ENCODE measurements at regions of chr17 and their contacts with region 1.

Region 1: DNA sequence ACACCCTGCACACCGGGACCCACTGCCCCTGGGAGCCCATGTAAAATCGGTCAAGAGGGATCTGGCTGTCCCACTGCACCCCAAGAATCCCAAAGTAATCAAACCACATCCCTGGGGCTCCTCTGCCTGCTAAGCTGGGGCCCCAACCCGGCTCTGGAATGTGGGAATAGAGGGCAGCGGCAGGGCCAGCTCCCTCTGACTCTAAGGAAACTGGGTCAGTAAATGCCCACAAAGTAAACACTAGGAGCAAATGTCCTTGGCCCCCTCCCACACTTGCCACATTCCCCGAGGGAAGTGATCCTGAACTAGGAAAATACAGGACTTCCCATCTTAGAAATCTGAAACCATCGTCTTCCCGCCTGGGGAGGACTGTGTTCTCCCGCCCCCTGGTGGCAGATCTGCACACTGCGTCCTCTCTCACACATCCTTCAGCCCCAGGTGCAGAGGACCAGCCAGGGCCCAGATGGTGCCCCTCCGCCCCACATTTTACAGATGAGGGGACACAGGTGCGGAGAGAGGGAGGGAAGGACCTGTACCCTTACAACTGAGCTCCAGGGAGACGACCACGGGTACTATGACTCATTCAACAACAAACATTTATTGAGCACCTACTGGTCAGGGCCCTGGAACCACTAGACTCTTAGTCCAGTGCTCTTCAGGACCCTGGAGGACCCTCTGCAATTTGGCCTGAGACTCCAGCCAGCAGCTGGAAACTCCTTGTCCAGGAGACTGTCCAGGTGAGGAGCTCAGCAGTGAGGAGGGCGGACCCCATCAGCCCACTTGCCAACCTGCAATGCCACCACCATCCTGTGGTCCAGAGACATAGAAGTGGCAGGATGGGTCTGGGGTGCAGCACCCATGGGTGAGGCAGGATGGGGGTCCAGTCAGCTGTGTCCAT is 10.1 kb downstream of the P3H4 start:
- DNase-seq: peak; percentile 74 to 90 (median 83)
- ATAC-seq: peak; percentile 79 to 89 (median 84)
- H3K4me3 ChIP-seq: peak overlapping the region in 3 of 12 donors; percentile 24 to 34 (median 29)
- H3K27ac ChIP-seq: peak overlapping the region in 1 of 12 donors; percentile 54
- H3K4me1 ChIP-seq: peaks cover 0 to 11% (median 10%) of the 10 kb centered on the region in 12 donors
- H3K27me3 ChIP-seq: no peaks in the 10 kb centered on the region
- CTCF ChIP-seq: peak; percentile 93 to 99 (median 97)
- POLR2A ChIP-seq: no peak

Region 2: DNA sequence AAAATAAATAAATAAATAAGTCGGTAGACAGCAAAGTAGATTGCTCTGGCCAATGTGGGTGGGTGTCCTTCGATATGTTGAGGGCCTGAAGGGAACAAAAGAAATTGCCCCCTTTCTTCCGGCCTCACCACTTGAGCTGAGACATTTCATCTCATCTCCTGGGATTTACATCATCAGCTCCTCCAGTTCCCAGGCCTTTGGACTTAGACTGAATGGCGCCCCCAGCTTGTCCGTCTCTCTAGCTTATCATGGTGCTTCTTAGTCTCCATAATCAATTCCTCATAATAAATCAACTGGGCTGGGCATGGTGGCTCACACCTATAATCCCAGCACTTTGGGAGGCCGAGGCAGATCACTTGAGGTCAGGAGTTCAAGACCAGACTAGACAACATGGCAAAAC is 53.3 kb before region 1 on chr17:
- intact Hi-C with region 1: no loop called
- DNase-seq: no peak
- ATAC-seq: no peak
- H3K4me3 ChIP-seq: no peak overlapping the region
- H3K27ac ChIP-seq: no peak overlapping the region
- H3K4me1 ChIP-seq: peaks cover 0 to 2% (median 0%) of the 10 kb centered on the region in 12 donors
- H3K27me3 ChIP-seq: no peaks in the 10 kb centered on the region
- CTCF ChIP-seq: no peak
- POLR2A ChIP-seq: no peak

Region 3: DNA sequence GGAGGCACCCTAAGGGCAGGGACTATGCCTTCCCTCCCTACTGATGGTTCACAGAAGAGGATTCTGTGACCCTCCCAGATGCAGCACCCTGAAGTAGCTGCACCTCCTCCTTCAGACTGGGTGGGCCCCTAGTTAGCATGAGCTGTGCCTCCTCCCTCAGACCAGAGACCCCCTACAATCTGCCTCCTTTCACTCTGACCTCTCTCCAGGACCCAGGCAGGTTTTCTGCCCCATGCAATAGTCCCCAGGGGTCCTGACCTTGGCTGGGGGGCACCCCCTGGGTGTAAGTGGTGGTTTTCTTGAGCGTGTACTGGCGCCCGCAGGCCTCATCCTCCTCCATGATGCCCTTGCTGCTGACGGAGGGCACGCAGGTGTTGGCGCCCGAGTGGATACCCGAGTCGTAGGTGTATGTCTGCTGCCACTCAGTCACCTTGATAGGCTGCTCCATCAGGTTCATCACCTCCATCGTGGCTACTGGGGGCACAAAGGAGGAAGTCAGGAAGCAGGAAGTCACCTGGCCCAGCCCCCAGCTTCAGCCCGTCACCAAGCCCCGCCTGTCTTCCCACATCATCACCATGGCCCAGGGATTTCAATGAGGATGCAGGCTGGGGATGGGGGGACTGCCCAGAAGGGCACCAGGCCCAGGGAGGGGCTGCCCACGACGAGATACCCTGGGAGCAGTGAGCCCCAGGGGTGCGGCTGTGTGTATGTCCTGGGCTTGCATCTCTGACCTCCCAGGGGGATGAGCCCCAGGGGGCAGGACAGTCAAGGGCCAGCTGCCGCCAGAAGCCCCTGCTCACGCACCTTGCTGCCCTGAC is 30.0 kb before region 1 on chr17:
- intact Hi-C with region 1: loop called in 5 of 10 experiments (anchors 2 to 5 kb)
- DNase-seq: no peak
- ATAC-seq: no peak
- H3K4me3 ChIP-seq: no peak overlapping the region
- H3K27ac ChIP-seq: peak overlapping the region in 8 of 12 donors; percentile 83 to 97 (median 96)
- H3K4me1 ChIP-seq: peaks cover 13 to 56% (median 46%) of the 10 kb centered on the region in 12 donors
- H3K27me3 ChIP-seq: no peaks in the 10 kb centered on the region
- CTCF ChIP-seq: no peak
- POLR2A ChIP-seq: no peak

Region 4: GRCh38 chr17:41910701-41911391 is 109.2 kb after region 1 on chr17:
- intact Hi-C with region 1: no loop called
- DNase-seq: no peak
- ATAC-seq: no peak
- H3K4me3 ChIP-seq: no peak overlapping the region
- H3K27ac ChIP-seq: no peak overlapping the region
- H3K4me1 ChIP-seq: peaks cover 0 to 14% (median 8%) of the 10 kb centered on the region in 12 donors
- H3K27me3 ChIP-seq: no peaks in the 10 kb centered on the region
- CTCF ChIP-seq: no peak
- POLR2A ChIP-seq: no peak

Measured in heart left ventricle (tissue), 16 donors.